ENCODE measurements at regions of chr12 and their contacts with region 1.

Region 1: GRCh38 chr12:54935235-54935951 is 49.2 kb downstream of the TESPA1 start:
- DNase-seq: peak in 8 of 9 donors; percentile 40 to 67 (median 51)
- ATAC-seq: peak; percentile 88
- H3K4me3 ChIP-seq: no peak overlapping the region
- H3K4me3 Mint-ChIP-seq: peak overlapping the region; percentile 0 to 74 (median 62)
- H3K27ac ChIP-seq: peak overlapping the region; percentile 29
- H3K27ac Mint-ChIP-seq: peak overlapping the region; percentile 60 to 98 (median 88)
- H3K4me1 ChIP-seq: peaks cover 36 to 39% of the 10 kb centered on the region in 2 donors
- H3K4me1 Mint-ChIP-seq: peaks cover 28 to 56% (median 53%) of the 10 kb centered on the region in 7 donors
- H3K27me3 ChIP-seq: no peaks in the 10 kb centered on the region
- H3K27me3 Mint-ChIP-seq: no peaks in the 10 kb centered on the region

Region 2: GRCh38 chr12:54723379-54724256 is 211.8 kb before region 1 on chr12:
- CTCF ChIA-PET with region 1: no interaction called
- POLR2A ChIA-PET with region 1: no interaction called
- intact Hi-C with region 1: loop called in 1 of 2 experiments (anchors 1 kb)
- DNase-seq: peak in 7 of 9 donors; percentile 21 to 50 (median 35)
- ATAC-seq: peak; percentile 73
- H3K4me3 ChIP-seq: no peak overlapping the region
- H3K4me3 Mint-ChIP-seq: no peak overlapping the region
- H3K27ac ChIP-seq: no peak overlapping the region
- H3K27ac Mint-ChIP-seq: peak overlapping the region in 1 of 9 donors; percentile 18
- H3K4me1 ChIP-seq: no peaks in the 10 kb centered on the region
- H3K4me1 Mint-ChIP-seq: peaks cover 2 to 24% (median 10%) of the 10 kb centered on the region in 7 donors
- H3K27me3 ChIP-seq: no peaks in the 10 kb centered on the region
- H3K27me3 Mint-ChIP-seq: peaks cover 0 to 29% (median 8%) of the 10 kb centered on the region in 5 donors

Region 3: DNA sequence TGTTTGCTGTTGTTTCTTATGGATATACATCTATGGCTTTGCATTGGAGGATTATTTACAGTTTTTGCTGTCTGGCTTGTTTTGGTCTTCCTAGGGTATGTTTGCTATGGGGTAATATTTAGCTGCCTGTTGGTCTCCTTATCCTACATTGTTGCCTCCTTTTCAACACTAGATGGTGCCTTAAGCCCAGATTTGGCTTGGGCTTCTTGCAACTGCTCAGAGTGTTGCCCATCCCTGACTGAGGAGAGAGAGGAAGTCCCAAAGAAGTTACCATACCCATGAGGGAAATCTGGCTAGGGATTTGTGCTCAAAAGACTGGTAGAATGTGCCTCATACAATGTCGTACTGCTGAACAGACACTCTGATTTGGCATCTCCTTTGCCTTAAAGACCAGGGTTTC is 175.6 kb before region 1 on chr12:
- CTCF ChIA-PET with region 1: interaction called, 3 read pairs
- POLR2A ChIA-PET with region 1: no interaction called
- intact Hi-C with region 1: loop called in 1 of 2 experiments (anchors 1 kb)
- DNase-seq: peak in 3 of 9 donors; percentile 14 to 45 (median 26)
- ATAC-seq: no peak
- H3K4me3 ChIP-seq: no peak overlapping the region
- H3K4me3 Mint-ChIP-seq: no peak overlapping the region
- H3K27ac ChIP-seq: no peak overlapping the region
- H3K27ac Mint-ChIP-seq: no peak overlapping the region
- H3K4me1 ChIP-seq: no peaks in the 10 kb centered on the region
- H3K4me1 Mint-ChIP-seq: peaks cover 0 to 20% (median 4%) of the 10 kb centered on the region in 7 donors
- H3K27me3 ChIP-seq: no peaks in the 10 kb centered on the region
- H3K27me3 Mint-ChIP-seq: peaks cover 0 to 24% (median 0%) of the 10 kb centered on the region in 5 donors

Region 4: GRCh38 chr12:54795644-54796043 is 139.7 kb before region 1 on chr12:
- CTCF ChIA-PET with region 1: no interaction called
- POLR2A ChIA-PET with region 1: no interaction called
- intact Hi-C with region 1: no loop called
- DNase-seq: no peak
- ATAC-seq: no peak
- H3K4me3 ChIP-seq: no peak overlapping the region
- H3K4me3 Mint-ChIP-seq: no peak overlapping the region
- H3K27ac ChIP-seq: no peak overlapping the region
- H3K27ac Mint-ChIP-seq: no peak overlapping the region
- H3K4me1 ChIP-seq: no peaks in the 10 kb centered on the region
- H3K4me1 Mint-ChIP-seq: no peaks in the 10 kb centered on the region
- H3K27me3 ChIP-seq: no peaks in the 10 kb centered on the region
- H3K27me3 Mint-ChIP-seq: peaks cover 0 to 18% (median 9%) of the 10 kb centered on the region in 5 donors

Region 5: GRCh38 chr12:54853995-54854566 is 81.3 kb before region 1 on chr12 and contains the start of gene MUCL1:
- CTCF ChIA-PET with region 1: interaction called, 3 read pairs
- POLR2A ChIA-PET with region 1: no interaction called
- intact Hi-C with region 1: loop called (anchors 1 kb)
- DNase-seq: peak; percentile 21 to 79 (median 73)
- ATAC-seq: peak; percentile 99
- H3K4me3 ChIP-seq: no peak within 1 kb of the TSS
- H3K4me3 Mint-ChIP-seq: no peak within 1 kb of the TSS
- H3K27ac ChIP-seq: no peak within 1 kb of the TSS
- H3K27ac Mint-ChIP-seq: peak within 1 kb of the TSS in 2 of 9 donors; percentile 44 to 70
- H3K4me1 ChIP-seq: no peaks in the 10 kb centered on the region
- H3K4me1 Mint-ChIP-seq: peaks cover 0 to 12% (median 5%) of the 10 kb centered on the region in 7 donors
- H3K27me3 ChIP-seq: no peaks in the 10 kb centered on the region
- H3K27me3 Mint-ChIP-seq: peaks cover 0 to 4% (median 0%) of the 10 kb centered on the region in 5 donors
- total RNA-seq, gene MUCL1: not detected

Region 6: DNA sequence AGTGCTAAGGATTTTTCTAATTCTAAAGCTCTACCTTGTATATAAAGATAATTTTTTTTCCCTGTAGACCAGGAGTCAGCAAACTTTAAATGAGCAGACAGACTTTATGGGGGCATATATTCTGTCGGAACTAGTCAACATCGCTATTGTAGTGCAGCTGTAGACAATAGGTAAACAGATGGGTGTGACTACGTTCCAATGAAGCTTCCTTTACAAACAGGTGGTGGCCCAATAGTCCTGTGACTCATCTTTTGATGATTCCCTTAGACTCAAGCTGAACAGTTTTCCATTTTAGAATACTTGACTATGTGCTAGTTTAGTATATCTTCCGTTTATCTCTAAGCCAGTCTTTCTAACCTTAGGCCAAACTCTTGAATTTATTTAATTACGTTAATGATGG is 64.8 kb before region 1 on chr12:
- CTCF ChIA-PET with region 1: no interaction called
- POLR2A ChIA-PET with region 1: no interaction called
- intact Hi-C with region 1: no loop called
- DNase-seq: no peak
- ATAC-seq: no peak
- H3K4me3 ChIP-seq: no peak overlapping the region
- H3K4me3 Mint-ChIP-seq: no peak overlapping the region
- H3K27ac ChIP-seq: no peak overlapping the region
- H3K27ac Mint-ChIP-seq: no peak overlapping the region
- H3K4me1 ChIP-seq: no peaks in the 10 kb centered on the region
- H3K4me1 Mint-ChIP-seq: no peaks in the 10 kb centered on the region
- H3K27me3 ChIP-seq: no peaks in the 10 kb centered on the region
- H3K27me3 Mint-ChIP-seq: peaks cover 5 to 56% (median 20%) of the 10 kb centered on the region in 5 donors

Region 7: DNA sequence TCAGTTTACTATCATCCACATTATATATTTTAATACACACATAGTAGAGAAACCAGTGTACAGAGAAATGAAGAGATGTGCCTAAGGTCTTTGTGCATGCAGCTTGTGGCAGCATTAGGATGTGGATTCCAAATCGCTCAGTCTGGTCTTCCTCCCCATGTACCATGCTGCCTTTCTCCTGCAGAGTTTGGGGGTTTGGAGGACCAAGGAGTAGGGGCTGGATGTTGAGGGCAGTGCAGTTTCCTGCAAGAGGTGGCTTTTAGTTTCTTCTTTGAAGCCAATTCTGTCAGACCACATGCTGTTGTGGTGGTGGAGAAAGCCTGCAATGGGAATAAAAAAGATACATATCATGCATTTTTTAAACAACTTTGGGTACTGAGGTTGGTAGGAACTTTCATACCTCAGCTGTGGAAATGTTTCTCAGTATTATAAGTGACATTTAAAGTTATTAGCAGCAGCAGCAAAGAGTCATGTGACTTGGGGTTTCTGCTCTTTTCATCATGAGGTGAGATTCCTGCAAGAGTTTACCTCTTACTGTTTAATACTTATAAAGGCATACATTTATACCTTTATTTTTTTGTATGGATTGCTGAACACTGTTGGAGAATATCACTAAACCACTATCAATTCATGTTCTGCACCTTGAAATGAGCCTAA is 14.8 kb after region 1 on chr12:
- CTCF ChIA-PET with region 1: no interaction called
- POLR2A ChIA-PET with region 1: interaction called, 5 read pairs
- intact Hi-C with region 1: loop called in 1 of 2 experiments (anchors 2 kb)
- DNase-seq: no peak
- ATAC-seq: no peak
- H3K4me3 ChIP-seq: no peak overlapping the region
- H3K4me3 Mint-ChIP-seq: peak overlapping the region in 5 of 10 donors; percentile 14 to 66 (median 27)
- H3K27ac ChIP-seq: no peak overlapping the region
- H3K27ac Mint-ChIP-seq: peak overlapping the region in 8 of 9 donors; percentile 62 to 94 (median 88)
- H3K4me1 ChIP-seq: peaks cover under 1 to 11% of the 10 kb centered on the region in 2 donors
- H3K4me1 Mint-ChIP-seq: peaks cover 27 to 74% (median 64%) of the 10 kb centered on the region in 7 donors
- H3K27me3 ChIP-seq: no peaks in the 10 kb centered on the region
- H3K27me3 Mint-ChIP-seq: no peaks in the 10 kb centered on the region